ENCODE measurements at regions of chr7 and their contacts with region 1.

Region 1: GRCh38 chr7:64098-64915 is 128.1 kb upstream of the FAM20C start:
- DNase-seq: peak; percentile 64
- ATAC-seq: peak; percentile 75
- H3K4me3 Mint-ChIP-seq: no peak overlapping the region
- H3K27ac Mint-ChIP-seq: no peak overlapping the region
- H3K4me1 Mint-ChIP-seq: peaks cover 31% of the 10 kb centered on the region
- H3K27me3 Mint-ChIP-seq: no peaks in the 10 kb centered on the region; the same call in 1 of the 2 replicates
- CTCF ChIP-seq: no peak

Region 2: DNA sequence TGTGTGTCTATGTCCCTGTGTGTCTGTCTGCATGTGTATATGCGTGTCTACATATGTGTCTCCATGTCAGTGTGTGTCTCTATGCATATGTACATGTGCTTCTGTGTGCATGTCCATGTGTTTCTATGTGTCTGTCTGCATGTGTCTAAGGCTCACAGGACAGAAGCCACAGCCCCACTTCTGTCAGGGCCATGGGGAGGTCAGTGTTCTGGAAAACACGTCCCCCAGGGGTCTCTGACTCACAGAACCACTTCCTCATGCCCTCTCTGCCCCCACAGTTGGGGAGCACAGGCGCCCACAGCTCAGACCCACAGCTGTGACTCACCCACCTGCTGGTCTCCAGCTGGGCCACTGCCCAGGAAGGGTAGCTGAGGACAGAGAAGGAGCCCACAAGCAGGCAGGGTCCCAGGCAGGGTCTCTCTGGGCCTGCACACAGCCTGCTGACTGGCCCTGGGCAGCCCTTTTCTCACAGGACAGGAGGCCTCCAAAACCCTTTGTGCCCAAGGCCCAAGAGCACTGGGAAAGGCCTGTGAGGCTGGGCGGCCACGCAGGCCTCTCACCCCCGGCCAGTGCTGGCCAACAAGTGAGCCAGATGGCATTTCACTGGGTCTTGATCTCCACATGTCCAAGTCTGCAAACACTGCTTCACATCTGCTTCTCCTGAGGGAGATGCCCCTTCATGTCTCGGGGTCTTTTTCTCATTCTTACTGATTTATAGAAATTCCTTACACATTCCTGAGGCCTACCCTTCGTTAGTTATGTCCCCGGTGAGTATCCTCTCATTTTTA is 25.1 kb after region 1 on chr7:
- CTCF ChIA-PET with region 1: interaction called, 13 read pairs
- POLR2A ChIA-PET with region 1: no interaction called
- DNase-seq: no peak
- ATAC-seq: no peak
- H3K4me3 Mint-ChIP-seq: no peak overlapping the region
- H3K27ac Mint-ChIP-seq: peak overlapping the region; percentile 40
- H3K4me1 Mint-ChIP-seq: peaks cover 56% of the 10 kb centered on the region
- H3K27me3 Mint-ChIP-seq: no peaks in the 10 kb centered on the region
- CTCF ChIP-seq: no peak

Region 3: DNA sequence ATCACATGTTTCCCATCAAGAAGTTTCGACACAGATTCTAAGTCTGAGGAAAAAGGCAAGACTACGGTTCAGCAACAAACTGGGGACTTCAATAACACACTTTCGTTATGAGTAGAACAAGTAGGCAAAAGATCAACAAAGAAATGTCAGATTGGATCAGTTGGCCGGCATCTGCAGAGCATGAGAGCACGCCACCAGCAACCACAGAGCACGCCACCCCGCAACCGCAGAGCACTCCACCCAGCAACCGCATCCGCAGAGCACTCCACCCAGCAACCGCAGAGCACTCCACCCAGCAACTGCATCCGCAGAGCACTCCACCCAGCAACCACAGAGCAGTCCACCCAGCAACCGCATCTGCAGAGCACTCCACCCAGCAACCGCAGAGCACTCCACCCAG is 38.4 kb after region 1 on chr7:
- CTCF ChIA-PET with region 1: no interaction called
- POLR2A ChIA-PET with region 1: no interaction called
- DNase-seq: no peak
- ATAC-seq: no peak
- H3K4me3 Mint-ChIP-seq: no peak overlapping the region
- H3K27ac Mint-ChIP-seq: no peak overlapping the region
- H3K4me1 Mint-ChIP-seq: peaks cover 43% of the 10 kb centered on the region
- H3K27me3 Mint-ChIP-seq: no peaks in the 10 kb centered on the region; the same call in none of the 2 replicates
- CTCF ChIP-seq: no peak

Region 4: GRCh38 chr7:119392-120163 is 55.3 kb after region 1 on chr7:
- CTCF ChIA-PET with region 1: interaction called, 13 read pairs
- POLR2A ChIA-PET with region 1: no interaction called
- DNase-seq: no peak
- ATAC-seq: no peak; the same call in 1 of the 2 replicates
- H3K4me3 Mint-ChIP-seq: no peak overlapping the region
- H3K27ac Mint-ChIP-seq: no peak overlapping the region
- H3K4me1 Mint-ChIP-seq: peaks cover 56% of the 10 kb centered on the region
- H3K27me3 Mint-ChIP-seq: peaks cover 15% of the 10 kb centered on the region
- CTCF ChIP-seq: no peak

Region 5: DNA sequence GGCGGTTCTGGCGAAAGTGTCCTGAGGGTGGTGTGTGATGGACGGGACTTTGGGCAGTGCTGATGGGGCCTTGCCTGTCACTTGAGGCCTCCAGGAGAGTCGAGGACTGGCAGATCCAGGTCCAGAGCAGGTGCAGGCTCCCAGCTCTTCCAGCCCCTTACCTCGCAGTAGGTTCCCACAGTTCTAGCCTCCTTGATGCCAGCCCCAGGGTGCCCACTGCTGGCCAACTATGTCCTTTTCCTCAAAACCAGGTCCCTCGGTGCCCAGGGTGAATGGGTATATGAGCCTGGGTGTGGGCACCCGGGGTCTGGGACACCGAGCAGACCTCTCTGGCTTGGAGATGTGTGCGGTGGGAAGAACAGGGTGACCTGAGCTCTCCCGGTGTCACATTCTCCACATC is 136.4 kb after region 1 on chr7:
- CTCF ChIA-PET with region 1: interaction called, 10 read pairs
- POLR2A ChIA-PET with region 1: no interaction called
- DNase-seq: no peak
- ATAC-seq: no peak; the same call in 1 of the 2 replicates
- H3K4me3 Mint-ChIP-seq: no peak overlapping the region
- H3K27ac Mint-ChIP-seq: 0 out of 2 replicates have a peak overlapping the region, but pooled peaks have one; percentile 9
- H3K4me1 Mint-ChIP-seq: peaks cover 11% of the 10 kb centered on the region
- H3K27me3 Mint-ChIP-seq: no peaks in the 10 kb centered on the region
- CTCF ChIP-seq: no peak

Region 6: GRCh38 chr7:266851-267840 is 202.8 kb after region 1 on chr7:
- CTCF ChIA-PET with region 1: interaction called, 11 read pairs
- POLR2A ChIA-PET with region 1: no interaction called
- DNase-seq: peak; percentile 89
- ATAC-seq: peak; percentile 78
- H3K4me3 Mint-ChIP-seq: no peak overlapping the region
- H3K27ac Mint-ChIP-seq: no peak overlapping the region
- H3K4me1 Mint-ChIP-seq: no peaks in the 10 kb centered on the region
- H3K27me3 Mint-ChIP-seq: peaks cover 27% of the 10 kb centered on the region
- CTCF ChIP-seq: peak; percentile 62

Region 7: GRCh38 chr7:641269-641671 is 577.0 kb after region 1 on chr7:
- CTCF ChIA-PET with region 1: no interaction called
- POLR2A ChIA-PET with region 1: no interaction called
- DNase-seq: no peak
- ATAC-seq: peak; percentile 32; the same call in 1 of the 2 replicates
- H3K4me3 Mint-ChIP-seq: no peak overlapping the region
- H3K27ac Mint-ChIP-seq: no peak overlapping the region
- H3K4me1 Mint-ChIP-seq: peaks cover 5% of the 10 kb centered on the region; the same call in 1 of the 2 replicates
- H3K27me3 Mint-ChIP-seq: no peaks in the 10 kb centered on the region
- CTCF ChIP-seq: no peak

Measured in WTC11 (cell line).